ENCODE measurements at regions of chr21 and their contacts with region 1.

Region 1: DNA sequence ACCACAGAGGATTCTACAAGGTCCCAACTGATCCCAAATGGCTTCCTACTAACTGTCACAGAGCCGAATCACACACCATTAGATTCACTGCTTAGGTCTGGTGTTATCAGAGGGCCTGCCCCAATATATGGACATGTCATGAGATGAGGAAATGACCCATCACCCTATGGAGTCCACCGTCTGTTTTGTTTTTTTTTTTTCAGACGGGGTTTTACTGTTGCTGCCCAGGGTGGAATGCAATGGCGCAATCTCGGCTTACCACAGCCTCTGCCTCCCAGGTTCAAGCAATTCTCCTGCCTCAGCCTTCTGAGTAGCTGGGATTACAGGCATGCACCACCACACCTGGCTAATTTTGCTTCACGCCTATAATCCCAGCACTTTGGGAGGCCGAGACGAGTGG is 83.8 kb upstream of the ETS2 start:
- DNase-seq: no peak
- ATAC-seq: no peak
- H3K4me3 ChIP-seq: no peak overlapping the region
- H3K27ac ChIP-seq: no peak overlapping the region
- H3K4me1 ChIP-seq: no peaks in the 10 kb centered on the region
- H3K27me3 ChIP-seq: no peaks in the 10 kb centered on the region
- CTCF ChIP-seq: no peak

Region 2: GRCh38 chr21:38505654-38506515 is 216.1 kb before region 1 on chr21:
- intact Hi-C with region 1: loop called in 1 of 3 experiments (anchors 10 kb)
- DNase-seq: peak in 1 of 6 donors; percentile 27
- ATAC-seq: peak in 3 of 4 donors; percentile 86 to 94 (median 91)
- H3K4me3 ChIP-seq: no peak overlapping the region
- H3K27ac ChIP-seq: no peak overlapping the region
- H3K4me1 ChIP-seq: no peaks in the 10 kb centered on the region
- H3K27me3 ChIP-seq: peaks cover 0 to 5% (median 0%) of the 10 kb centered on the region in 4 donors
- CTCF ChIP-seq: peak in 3 of 4 donors; percentile 27 to 36 (median 32)

Measured in pancreas (tissue), 10 donors.